CD8-positive, alpha-beta T cell (primary cell): ENCODE measurements at regions of chr1 and their contacts with region 1.

Region 1: DNA sequence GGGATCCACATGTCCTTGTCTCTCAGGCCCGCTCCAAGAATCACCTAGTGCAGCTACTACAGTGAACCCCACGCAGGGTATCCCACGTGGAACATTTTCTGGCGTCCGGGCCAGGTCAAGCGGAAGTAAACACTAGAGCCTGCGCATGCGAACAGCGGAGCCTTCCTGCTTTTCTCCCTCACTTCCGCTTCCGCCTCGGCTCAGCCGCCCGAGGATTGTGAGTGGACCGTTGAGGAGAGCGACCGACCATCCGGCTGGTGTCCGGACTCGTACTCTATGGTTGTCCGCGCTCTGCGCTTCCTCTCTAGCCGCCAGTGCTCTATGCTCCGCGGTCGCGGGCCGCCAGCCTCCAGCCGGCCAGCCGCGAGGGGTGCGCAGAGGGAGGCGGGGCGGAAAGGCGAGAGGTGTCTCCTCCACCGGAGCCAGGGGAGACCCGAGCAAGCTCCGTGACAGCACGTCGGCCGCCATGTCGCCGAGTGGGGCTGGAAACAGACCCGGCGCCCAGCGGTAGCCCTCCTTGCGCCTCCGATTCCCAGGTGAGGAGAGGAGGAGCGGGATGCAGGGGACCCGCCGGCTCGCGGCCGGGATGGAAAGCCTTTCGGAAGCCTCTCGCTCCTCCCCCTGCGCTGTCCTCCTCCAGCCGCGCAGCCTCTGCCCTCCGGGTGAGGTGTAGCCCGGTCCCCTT is at the starts of genes CNST and TFB2M:
- DNase-seq: peak; percentile 75 to 96 (median 91)
- ATAC-seq: peak; percentile 71
- H3K4me3 ChIP-seq: peak within 1 kb of the TSS; percentile 92 to 99
- H3K4me3 Mint-ChIP-seq: peak within 1 kb of the TSS; percentile 98
- H3K27ac ChIP-seq: peak within 1 kb of the TSS; percentile 83 to 91
- H3K27ac Mint-ChIP-seq: peak within 1 kb of the TSS; percentile 97
- H3K4me1 ChIP-seq: peaks cover 51% of the 10 kb centered on the region
- H3K4me1 Mint-ChIP-seq: peaks cover 54% of the 10 kb centered on the region
- H3K27me3 ChIP-seq: no peaks in the 10 kb centered on the region
- H3K27me3 Mint-ChIP-seq: no peaks in the 10 kb centered on the region
- CTCF ChIP-seq: no peak
- total RNA-seq, gene CNST: 64.1 to 64.4 TPM
- total RNA-seq, gene TFB2M: 15.8 to 16.4 TPM

Region 2: GRCh38 chr1:244652699-244653466 is 1913.4 kb before region 1 on chr1 and contains the start of gene DESI2:
- CTCF ChIA-PET with region 1: no interaction called
- POLR2A ChIA-PET with region 1: no interaction called
- intact Hi-C with region 1: loop called (anchors 2 to 10 kb)
- DNase-seq: peak; percentile 95 to 100 (median 97)
- ATAC-seq: peak; percentile 92
- H3K4me3 ChIP-seq: peak within 1 kb of the TSS; percentile 67 to 95
- H3K4me3 Mint-ChIP-seq: no peak within 1 kb of the TSS
- H3K27ac ChIP-seq: peak within 1 kb of the TSS; percentile 68 to 73
- H3K27ac Mint-ChIP-seq: peak within 1 kb of the TSS; percentile 86
- H3K4me1 ChIP-seq: peaks cover 22% of the 10 kb centered on the region
- H3K4me1 Mint-ChIP-seq: peaks cover 26% of the 10 kb centered on the region
- H3K27me3 ChIP-seq: no peaks in the 10 kb centered on the region
- H3K27me3 Mint-ChIP-seq: no peaks in the 10 kb centered on the region
- CTCF ChIP-seq: peak; percentile 39
- total RNA-seq, gene DESI2: 14.5 to 16.2 TPM

Region 3: GRCh38 chr1:246579818-246580217 is 13.5 kb after region 1 on chr1:
- CTCF ChIA-PET with region 1: no interaction called
- POLR2A ChIA-PET with region 1: interaction called, 4 read pairs
- intact Hi-C with region 1: loop called in 1 of 2 experiments (anchors 1 kb)
- DNase-seq: no peak
- ATAC-seq: no peak
- H3K4me3 ChIP-seq: no peak overlapping the region
- H3K4me3 Mint-ChIP-seq: no peak overlapping the region
- H3K27ac ChIP-seq: no peak overlapping the region
- H3K27ac Mint-ChIP-seq: peak overlapping the region; percentile 14
- H3K4me1 ChIP-seq: peaks cover 52% of the 10 kb centered on the region
- H3K4me1 Mint-ChIP-seq: peaks cover 80% of the 10 kb centered on the region
- H3K27me3 ChIP-seq: no peaks in the 10 kb centered on the region
- H3K27me3 Mint-ChIP-seq: no peaks in the 10 kb centered on the region
- CTCF ChIP-seq: no peak

Region 4: DNA sequence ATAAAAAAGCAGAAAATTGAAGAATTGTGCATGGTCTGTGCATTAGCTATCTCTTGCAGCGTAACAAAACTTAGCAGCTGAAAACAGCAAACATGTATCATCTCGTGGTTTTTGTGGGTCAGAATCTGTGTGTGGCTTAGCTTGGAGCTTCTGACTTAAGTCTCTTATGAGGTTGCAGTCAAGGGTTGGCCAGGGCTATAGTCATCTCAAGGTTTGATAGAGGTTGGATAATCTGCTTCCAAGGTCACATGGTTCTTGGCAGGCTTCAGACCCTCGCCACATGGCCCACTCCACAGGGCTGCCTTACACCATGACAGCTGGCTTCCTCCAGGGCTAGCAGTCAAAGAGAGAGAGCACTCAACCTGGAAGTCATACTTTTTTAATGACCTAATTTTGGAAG is 35.9 kb after region 1 on chr1:
- CTCF ChIA-PET with region 1: interaction called, 3 read pairs
- POLR2A ChIA-PET with region 1: no interaction called
- intact Hi-C with region 1: loop called (anchors 2 to 5 kb)
- DNase-seq: peak in 3 of 9 experiments; percentile 13 to 36 (median 14)
- ATAC-seq: peak; percentile 70
- H3K4me3 ChIP-seq: no peak overlapping the region
- H3K4me3 Mint-ChIP-seq: no peak overlapping the region
- H3K27ac ChIP-seq: no peak overlapping the region
- H3K27ac Mint-ChIP-seq: peak overlapping the region; percentile 63
- H3K4me1 ChIP-seq: peaks cover 28% of the 10 kb centered on the region
- H3K4me1 Mint-ChIP-seq: peaks cover 65% of the 10 kb centered on the region
- H3K27me3 ChIP-seq: no peaks in the 10 kb centered on the region
- H3K27me3 Mint-ChIP-seq: no peaks in the 10 kb centered on the region
- CTCF ChIP-seq: no peak

Region 5: DNA sequence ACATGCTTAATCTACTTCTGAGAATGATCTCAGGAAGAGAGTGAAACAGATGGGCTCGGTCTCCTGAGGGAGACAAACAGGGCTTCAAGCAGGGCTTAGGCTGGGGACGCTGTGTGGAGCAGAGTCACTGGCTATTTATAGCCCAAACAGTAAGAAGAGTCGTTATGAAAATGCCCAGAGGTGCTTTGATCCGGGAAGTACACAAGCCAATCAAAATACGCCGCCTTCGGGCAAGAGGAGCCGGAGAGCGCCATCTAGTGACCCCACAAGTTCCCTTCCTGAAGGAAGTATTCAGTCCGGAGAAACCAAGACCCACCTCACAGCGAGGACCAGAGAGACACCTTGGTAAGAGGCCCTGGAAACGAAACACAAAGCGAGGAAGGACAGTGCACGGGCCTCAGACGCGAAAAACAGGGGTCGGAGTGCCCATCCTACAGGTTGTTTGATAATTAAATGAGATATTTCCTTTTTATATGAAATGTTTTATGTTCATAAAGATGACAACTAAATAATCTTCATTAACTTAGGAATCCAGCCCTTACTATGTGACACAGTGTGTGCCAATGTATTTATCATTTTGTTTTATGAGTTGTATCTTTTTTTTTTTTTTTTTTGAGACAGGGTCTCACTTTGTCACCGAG is 132.9 kb after region 1 on chr1:
- CTCF ChIA-PET with region 1: no interaction called
- POLR2A ChIA-PET with region 1: no interaction called
- intact Hi-C with region 1: loop called in 1 of 2 experiments (anchors 2 kb)
- DNase-seq: peak; percentile 53 to 90 (median 76)
- ATAC-seq: peak; percentile 89
- H3K4me3 ChIP-seq: peak overlapping the region; percentile 11 to 38
- H3K4me3 Mint-ChIP-seq: peak overlapping the region; percentile 76
- H3K27ac ChIP-seq: peak overlapping the region in 1 of 2 experiments; percentile 43
- H3K27ac Mint-ChIP-seq: no peak overlapping the region
- H3K4me1 ChIP-seq: peaks cover 2% of the 10 kb centered on the region
- H3K4me1 Mint-ChIP-seq: peaks cover 4% of the 10 kb centered on the region
- H3K27me3 ChIP-seq: no peaks in the 10 kb centered on the region
- H3K27me3 Mint-ChIP-seq: peaks cover 2% of the 10 kb centered on the region
- CTCF ChIP-seq: peak; percentile 66

Region 6: DNA sequence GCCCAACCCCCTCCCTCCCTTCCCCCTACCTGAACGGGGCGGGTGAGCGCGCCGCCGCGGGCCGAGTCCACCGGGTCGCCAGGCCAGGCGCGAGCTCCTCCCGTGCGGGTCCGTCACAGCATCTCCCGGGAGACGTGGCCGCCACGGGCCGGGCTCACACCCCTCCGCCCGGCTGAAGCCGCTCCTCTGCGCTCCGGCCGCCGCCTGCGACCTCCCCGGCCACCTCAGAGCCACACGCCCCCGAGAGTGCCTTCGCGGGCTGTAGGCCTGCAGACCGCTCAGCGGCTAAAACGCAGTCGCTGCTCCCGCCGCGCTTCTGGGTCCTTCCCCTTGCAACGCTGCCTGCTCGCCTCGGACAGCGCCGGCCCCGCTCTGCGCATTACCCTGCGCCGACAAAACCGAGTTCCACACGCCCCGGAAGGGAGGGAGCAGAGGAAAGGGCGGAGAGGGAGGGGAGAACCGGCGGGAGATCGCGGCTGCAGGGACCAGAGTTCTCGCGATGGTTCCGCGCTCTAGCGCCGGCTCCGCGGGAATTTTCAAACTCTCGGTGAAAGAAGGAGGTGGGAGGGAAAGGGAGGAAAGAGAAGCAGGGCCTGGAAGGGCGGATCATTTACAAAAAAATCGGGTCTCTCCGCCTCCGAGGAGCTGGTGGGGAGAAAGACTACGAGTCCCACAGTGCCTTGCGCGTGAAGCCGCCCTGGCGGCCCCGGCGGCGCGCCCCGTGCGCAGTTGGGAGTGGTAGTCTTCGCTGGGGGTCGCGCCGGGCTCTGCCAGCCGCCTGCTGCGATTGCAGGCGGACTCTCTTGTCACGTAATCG is 365.5 kb after region 1 on chr1 and contains the start of gene AHCTF1:
- CTCF ChIA-PET with region 1: no interaction called
- POLR2A ChIA-PET with region 1: no interaction called
- intact Hi-C with region 1: loop called (anchors 2 to 5 kb)
- DNase-seq: peak; percentile 88 to 97 (median 94)
- ATAC-seq: peak; percentile 89
- H3K4me3 ChIP-seq: peak within 1 kb of the TSS; percentile 84 to 90
- H3K4me3 Mint-ChIP-seq: peak within 1 kb of the TSS; percentile 96
- H3K27ac ChIP-seq: peak within 1 kb of the TSS; percentile 78 to 94
- H3K27ac Mint-ChIP-seq: peak within 1 kb of the TSS; percentile 95
- H3K4me1 ChIP-seq: peaks cover 14% of the 10 kb centered on the region
- H3K4me1 Mint-ChIP-seq: peaks cover 33% of the 10 kb centered on the region
- H3K27me3 ChIP-seq: no peaks in the 10 kb centered on the region
- H3K27me3 Mint-ChIP-seq: no peaks in the 10 kb centered on the region
- CTCF ChIP-seq: no peak
- total RNA-seq, gene AHCTF1: 68.4 to 69.3 TPM

Region 7: DNA sequence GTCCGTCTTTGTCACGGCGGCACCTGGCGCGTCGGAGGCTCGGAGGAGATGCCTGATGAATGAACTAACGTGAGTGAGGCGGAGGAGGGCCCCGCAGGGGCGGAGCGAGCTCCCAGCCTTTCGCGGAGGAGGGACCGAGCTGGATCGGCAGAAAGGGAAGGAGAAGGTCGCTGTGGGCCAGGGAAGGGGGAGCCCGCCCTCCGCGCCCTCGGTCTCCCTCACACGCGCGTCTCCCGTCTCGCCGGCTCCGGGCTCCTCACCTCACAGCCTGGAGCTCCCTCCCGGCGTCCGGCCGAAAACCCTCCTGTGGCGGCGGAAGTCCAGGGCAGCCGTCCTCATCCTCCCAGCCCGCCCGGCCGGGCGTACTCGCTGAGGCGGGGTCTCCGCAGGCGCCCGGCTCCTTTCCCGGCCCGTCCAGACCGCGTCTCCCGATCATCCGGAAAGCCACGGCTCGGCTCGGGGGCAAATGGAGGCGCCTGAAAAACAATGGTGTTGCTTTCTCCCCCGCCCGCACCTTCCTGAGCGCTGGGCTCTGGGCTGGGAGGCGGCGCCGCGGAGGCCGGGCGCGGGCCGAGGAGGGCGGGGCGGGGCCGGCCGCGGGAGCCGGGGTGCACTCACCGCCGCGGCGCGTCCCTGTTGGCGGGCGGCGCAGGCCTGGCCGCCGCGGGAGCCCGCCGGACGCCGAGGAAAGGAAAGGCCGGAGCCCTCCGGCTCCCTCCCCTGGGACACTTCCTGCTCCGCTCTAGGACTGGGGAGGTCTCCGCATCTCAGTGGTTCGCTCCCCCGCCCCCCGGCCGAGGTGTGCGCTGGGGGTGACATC is 765.1 kb after region 1 on chr1 and contains the start of gene ZNF496:
- CTCF ChIA-PET with region 1: no interaction called
- POLR2A ChIA-PET with region 1: no interaction called
- intact Hi-C with region 1: loop called in 1 of 2 experiments (anchors 5 kb)
- DNase-seq: peak; percentile 27 to 79 (median 70)
- ATAC-seq: peak; percentile 65
- H3K4me3 ChIP-seq: peak within 1 kb of the TSS; percentile 71 to 74
- H3K4me3 Mint-ChIP-seq: peak within 1 kb of the TSS; percentile 94
- H3K27ac ChIP-seq: peak within 1 kb of the TSS; percentile 55 to 63
- H3K27ac Mint-ChIP-seq: peak within 1 kb of the TSS; percentile 94
- H3K4me1 ChIP-seq: peaks cover 56% of the 10 kb centered on the region
- H3K4me1 Mint-ChIP-seq: peaks cover 77% of the 10 kb centered on the region
- H3K27me3 ChIP-seq: no peaks in the 10 kb centered on the region
- H3K27me3 Mint-ChIP-seq: no peaks in the 10 kb centered on the region
- CTCF ChIP-seq: no peak
- total RNA-seq, gene ZNF496: 43.4 to 47.2 TPM